ENCODE measurements at regions of chr19 and their contacts with region 1.

Region 1: DNA sequence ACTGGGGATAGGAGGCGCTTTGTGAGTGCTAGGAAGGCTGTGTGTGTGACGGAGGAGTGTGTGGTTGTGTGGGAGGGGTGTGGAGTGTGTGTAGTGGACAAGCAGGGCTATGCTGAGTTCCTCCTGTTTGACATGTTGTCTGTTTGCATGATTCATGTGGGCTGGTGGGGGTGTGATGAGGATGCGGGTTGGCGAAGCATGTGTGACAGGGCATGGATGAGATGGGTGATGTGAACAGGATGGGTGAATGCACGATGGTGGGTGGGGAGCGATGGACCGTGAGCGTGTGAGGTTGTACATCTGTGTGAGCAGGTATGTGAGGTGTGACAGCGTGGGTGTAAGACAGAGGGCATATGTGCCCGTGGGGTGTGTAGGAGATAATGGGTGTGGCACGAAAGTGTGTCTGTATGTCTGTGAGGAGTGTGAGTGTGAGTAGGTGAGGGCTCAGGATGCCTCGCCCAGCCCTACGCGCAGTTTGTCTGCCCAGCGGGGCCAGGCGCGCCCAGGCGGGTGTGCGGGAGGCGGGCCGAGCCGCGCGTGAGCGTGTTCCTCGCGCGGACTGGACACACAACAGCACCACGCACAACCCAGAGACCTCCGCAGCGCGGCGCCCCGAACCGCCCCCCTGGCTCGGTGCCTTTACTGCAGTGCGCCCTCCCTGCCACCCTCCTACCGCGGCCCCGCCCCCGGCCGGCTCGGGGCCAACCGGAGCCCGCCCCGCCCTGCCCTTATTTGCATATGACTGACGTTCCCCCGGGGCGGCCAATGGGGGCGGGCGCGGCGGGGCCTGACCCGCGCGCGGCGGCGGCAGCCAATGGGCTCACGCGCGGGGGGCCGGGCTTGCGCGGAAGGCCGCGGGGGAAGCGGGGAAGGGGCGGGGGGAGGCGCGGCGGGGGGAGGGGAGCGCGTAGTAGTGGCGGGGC is 14.4 kb downstream of the CIC start:
- DNase-seq: peak; percentile 98
- ATAC-seq: peak; percentile 62
- H3K4me3 Mint-ChIP-seq: no peak overlapping the region
- H3K27ac Mint-ChIP-seq: no peak overlapping the region
- H3K4me1 Mint-ChIP-seq: peaks cover 41% of the 10 kb centered on the region
- H3K27me3 Mint-ChIP-seq: no peaks in the 10 kb centered on the region

Region 2: DNA sequence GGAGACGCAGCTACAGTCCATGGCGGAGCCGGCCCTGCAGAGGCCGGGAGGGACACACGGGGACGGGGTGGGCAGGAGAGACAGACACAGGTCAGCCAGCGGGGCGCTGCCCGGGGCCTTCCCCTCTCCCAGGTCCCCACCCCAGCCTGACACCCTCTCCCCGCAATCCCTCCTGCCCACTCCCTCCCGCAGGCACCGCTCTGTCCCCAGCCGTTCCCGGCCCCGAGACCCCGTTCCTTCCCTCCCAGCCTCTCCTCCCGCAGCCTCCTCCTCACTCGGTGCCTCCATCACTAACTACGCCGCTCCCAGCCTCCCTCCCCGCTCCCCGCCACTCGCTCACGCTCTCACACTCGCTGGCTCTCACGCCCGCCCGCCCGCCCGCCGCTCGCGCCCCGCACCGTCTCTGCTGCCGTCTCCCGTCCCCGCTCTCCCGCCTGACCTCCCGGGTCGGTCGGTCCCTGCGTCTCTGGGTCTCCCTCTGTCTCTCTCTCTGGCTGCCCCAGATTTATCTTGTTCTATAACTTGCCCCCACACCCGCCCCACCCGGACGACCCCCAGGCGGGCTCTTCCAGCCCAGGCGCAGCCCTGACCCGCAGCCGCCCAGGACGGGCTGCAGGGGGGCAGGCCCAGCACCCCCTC is 370.4 kb before region 1 on chr19:
- CTCF ChIA-PET with region 1: no interaction called
- POLR2A ChIA-PET with region 1: no interaction called
- intact Hi-C with region 1: no loop called
- DNase-seq: peak; percentile 53
- ATAC-seq: peak; percentile 11
- H3K4me3 Mint-ChIP-seq: no peak overlapping the region
- H3K27ac Mint-ChIP-seq: no peak overlapping the region
- H3K4me1 Mint-ChIP-seq: peaks cover 28% of the 10 kb centered on the region
- H3K27me3 Mint-ChIP-seq: peaks cover 23% of the 10 kb centered on the region

Region 3: GRCh38 chr19:41945135-41945766 is 338.2 kb before region 1 on chr19:
- CTCF ChIA-PET with region 1: no interaction called
- POLR2A ChIA-PET with region 1: no interaction called
- intact Hi-C with region 1: loop called in 1 of 2 experiments (anchors 5 kb)
- DNase-seq: peak; percentile 95
- ATAC-seq: peak; percentile 92
- H3K4me3 Mint-ChIP-seq: peak overlapping the region; percentile 41
- H3K27ac Mint-ChIP-seq: peak overlapping the region; percentile 96
- H3K4me1 Mint-ChIP-seq: peaks cover 50% of the 10 kb centered on the region
- H3K27me3 Mint-ChIP-seq: peaks cover 4% of the 10 kb centered on the region

Region 4: DNA sequence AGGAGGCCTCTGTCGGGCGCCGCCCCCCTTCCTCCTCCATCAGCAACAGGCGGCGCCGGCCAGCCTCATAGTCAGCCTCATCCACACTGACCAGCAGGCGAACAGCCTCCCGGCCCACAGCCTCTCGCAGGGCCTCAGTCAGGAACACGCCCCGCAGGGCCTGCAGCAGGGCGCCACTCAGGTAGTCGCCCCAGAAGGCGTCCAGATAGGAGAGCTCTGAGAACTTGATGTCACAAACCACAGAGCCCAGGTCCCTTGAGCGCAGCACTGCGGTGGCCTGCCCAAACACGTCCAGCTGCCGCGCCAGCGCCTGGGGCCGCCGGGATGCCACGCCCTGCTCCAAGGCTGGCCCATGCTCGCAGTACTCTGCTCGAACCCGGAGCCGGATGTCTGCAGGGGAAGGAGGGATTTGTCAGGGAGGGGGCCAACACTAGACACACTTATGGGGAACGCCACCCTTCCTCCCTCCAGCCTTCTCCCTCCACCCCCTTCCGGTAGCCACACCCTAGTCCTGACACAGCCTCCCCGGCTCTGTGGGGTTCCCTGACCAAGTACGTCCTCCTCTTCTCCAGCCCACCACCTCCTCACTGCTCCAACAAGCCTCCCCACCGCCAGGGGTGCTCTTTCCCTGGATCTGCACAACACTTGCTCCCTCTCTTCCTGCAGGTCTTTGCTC is 83.8 kb before region 1 on chr19:
- CTCF ChIA-PET with region 1: no interaction called
- POLR2A ChIA-PET with region 1: no interaction called
- intact Hi-C with region 1: loop called in 1 of 2 experiments (anchors 5 kb)
- DNase-seq: peak; percentile 83
- ATAC-seq: peak; percentile 69
- H3K4me3 Mint-ChIP-seq: peak overlapping the region; percentile 57
- H3K27ac Mint-ChIP-seq: peak overlapping the region; percentile 91
- H3K4me1 Mint-ChIP-seq: peaks cover 81% of the 10 kb centered on the region
- H3K27me3 Mint-ChIP-seq: no peaks in the 10 kb centered on the region

Region 5: DNA sequence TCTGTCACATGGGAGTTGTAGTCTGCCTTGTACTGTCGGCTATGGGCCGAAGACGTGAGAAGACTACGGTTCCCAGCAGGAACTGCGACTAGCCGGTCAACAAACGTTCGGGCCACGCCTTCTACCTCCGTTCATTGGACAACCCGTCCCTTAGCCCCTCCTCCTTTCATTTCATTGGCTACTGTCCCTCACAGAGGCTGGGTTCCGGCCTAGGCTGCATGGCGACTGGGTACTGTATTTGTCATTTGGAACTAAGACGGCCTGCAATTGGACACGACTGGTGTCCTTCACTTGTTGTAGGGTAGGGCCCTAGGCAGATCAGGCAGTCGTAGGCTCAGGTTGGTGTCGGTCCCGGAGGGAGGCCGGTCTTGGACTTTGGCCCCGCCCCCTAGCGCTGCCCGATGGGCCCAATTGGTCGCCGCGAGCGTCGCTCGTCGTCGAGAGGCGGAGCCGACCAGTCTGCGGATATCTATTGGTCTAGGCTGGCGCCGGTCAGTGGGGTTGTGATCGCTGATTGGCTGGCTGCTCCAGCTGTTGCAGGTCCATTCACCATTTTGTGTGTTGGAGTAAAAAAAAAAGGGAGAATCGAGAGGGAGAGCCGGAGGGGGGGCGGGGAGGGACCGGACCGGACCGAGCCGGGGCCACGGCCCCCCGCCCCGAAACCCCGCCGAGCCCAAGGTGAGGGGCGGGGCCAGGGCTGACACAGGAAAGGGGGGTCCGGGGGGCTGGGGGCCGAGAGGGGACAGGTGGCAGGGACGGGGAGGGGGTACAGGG is 14.5 kb before region 1 on chr19 and contains the start of gene CIC:
- CTCF ChIA-PET with region 1: interaction called, 34 read pairs
- POLR2A ChIA-PET with region 1: interaction called, 26 read pairs
- intact Hi-C with region 1: loop called (anchors 1 kb)
- DNase-seq: peak; percentile 100
- ATAC-seq: peak; percentile 87
- H3K4me3 Mint-ChIP-seq: no peak within 1 kb of the TSS
- H3K27ac Mint-ChIP-seq: peak within 1 kb of the TSS; percentile 97
- H3K4me1 Mint-ChIP-seq: peaks cover 24% of the 10 kb centered on the region
- H3K27me3 Mint-ChIP-seq: no peaks in the 10 kb centered on the region
- total RNA-seq, gene CIC: 62.8 to 66.3 TPM

Measured in activated CD4-positive, alpha-beta T cell treated with anti-CD3 and anti-CD28 coated beads for 36 hours (primary cell).